ENCODE measurements at regions of chr4 and their contacts with region 1.

Region 1: DNA sequence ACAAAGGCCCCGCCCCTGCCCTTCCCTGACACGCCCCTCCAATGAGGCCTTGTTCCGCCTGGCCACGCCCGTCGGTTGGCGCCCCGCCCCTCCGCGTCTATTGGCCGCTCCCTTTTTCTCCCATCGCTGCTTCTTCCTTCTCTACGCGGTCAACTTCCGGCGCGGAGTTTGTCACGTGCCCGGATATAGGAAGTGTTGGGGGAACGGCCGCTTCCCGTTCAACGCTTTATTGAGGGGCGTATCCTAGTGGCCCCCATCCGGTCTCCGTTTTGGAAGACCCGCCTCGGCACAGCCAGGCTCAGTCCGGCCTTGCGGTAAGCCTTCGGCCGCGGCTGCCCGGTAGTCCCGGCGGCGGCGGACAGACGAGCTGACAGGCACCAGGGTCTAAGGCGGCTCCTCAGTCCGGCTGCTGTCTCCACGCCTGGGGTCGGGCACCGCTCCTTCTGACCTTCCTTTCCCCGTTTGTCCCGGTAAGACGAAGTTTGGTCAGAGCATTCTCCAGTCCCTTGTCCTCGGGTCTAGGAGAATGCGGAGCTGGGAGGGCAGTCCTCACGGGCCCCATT is at the start of gene EXOC1:
- DNase-seq: peak; percentile 94 to 97
- ATAC-seq: peak; percentile 100
- H3K4me3 ChIP-seq: peak within 1 kb of the TSS; percentile 74 to 97 (median 87)
- H3K27ac ChIP-seq: peak within 1 kb of the TSS; percentile 72 to 86 (median 82)
- H3K4me1 ChIP-seq: peaks cover 10 to 22% of the 10 kb centered on the region in 2 donors
- H3K27me3 ChIP-seq: no peaks in the 10 kb centered on the region
- CTCF ChIP-seq: no peak
- POLR2A ChIP-seq: peak; percentile 40 to 55
- total RNA-seq, gene EXOC1: 14.8 to 22.3 (median 20.3) TPM

Region 2: GRCh38 chr4:55345980-55346850 is 507.4 kb before region 1 on chr4 and contains the start of gene SRD5A3:
- in situ Hi-C with region 1: loop called in 3 of 4 experiments (anchors 25 kb)
- intact Hi-C with region 1: loop called (anchors 5 kb)
- DNase-seq: peak; percentile 61 to 74
- ATAC-seq: peak; percentile 95 to 97
- H3K4me3 ChIP-seq: peak within 1 kb of the TSS; percentile 68 to 99 (median 82)
- H3K27ac ChIP-seq: peak within 1 kb of the TSS; percentile 89 to 99 (median 95)
- H3K4me1 ChIP-seq: peaks cover 0 to 20% of the 10 kb centered on the region in 2 donors
- H3K27me3 ChIP-seq: no peaks in the 10 kb centered on the region
- CTCF ChIP-seq: peak; percentile 88 to 99 (median 97)
- POLR2A ChIP-seq: peak; percentile 47 to 68
- total RNA-seq, gene SRD5A3: 2.4 to 7.6 (median 5.1) TPM

Region 3: GRCh38 chr4:55358668-55359067 is 494.9 kb before region 1 on chr4:
- in situ Hi-C with region 1: loop called in 1 of 4 experiments (anchors 25 kb)
- intact Hi-C with region 1: no loop called
- DNase-seq: no peak
- ATAC-seq: peak; percentile 84 to 97
- H3K4me3 ChIP-seq: peak overlapping the region in 1 of 4 donors; percentile 16
- H3K27ac ChIP-seq: peak overlapping the region; percentile 25 to 67 (median 63)
- H3K4me1 ChIP-seq: peaks cover 8 to 23% of the 10 kb centered on the region in 2 donors
- H3K27me3 ChIP-seq: no peaks in the 10 kb centered on the region
- CTCF ChIP-seq: no peak
- POLR2A ChIP-seq: no peak

Region 4: GRCh38 chr4:55395529-55396307 is 457.8 kb before region 1 on chr4 and contains the start of gene TMEM165:
- in situ Hi-C with region 1: loop called in 1 of 4 experiments (anchors 25 kb)
- intact Hi-C with region 1: loop called (anchors 5 kb)
- DNase-seq: peak; percentile 88
- ATAC-seq: peak; percentile 89 to 90
- H3K4me3 ChIP-seq: peak within 1 kb of the TSS; percentile 72 to 95 (median 77)
- H3K27ac ChIP-seq: peak within 1 kb of the TSS; percentile 83 to 96 (median 91)
- H3K4me1 ChIP-seq: peaks cover 32 to 38% of the 10 kb centered on the region in 2 donors
- H3K27me3 ChIP-seq: no peaks in the 10 kb centered on the region
- CTCF ChIP-seq: peak in 1 of 5 experiments; percentile 15
- POLR2A ChIP-seq: peak; percentile 92 to 93
- total RNA-seq, gene TMEM165: 23.5 to 80.3 (median 48.9) TPM

Region 5: DNA sequence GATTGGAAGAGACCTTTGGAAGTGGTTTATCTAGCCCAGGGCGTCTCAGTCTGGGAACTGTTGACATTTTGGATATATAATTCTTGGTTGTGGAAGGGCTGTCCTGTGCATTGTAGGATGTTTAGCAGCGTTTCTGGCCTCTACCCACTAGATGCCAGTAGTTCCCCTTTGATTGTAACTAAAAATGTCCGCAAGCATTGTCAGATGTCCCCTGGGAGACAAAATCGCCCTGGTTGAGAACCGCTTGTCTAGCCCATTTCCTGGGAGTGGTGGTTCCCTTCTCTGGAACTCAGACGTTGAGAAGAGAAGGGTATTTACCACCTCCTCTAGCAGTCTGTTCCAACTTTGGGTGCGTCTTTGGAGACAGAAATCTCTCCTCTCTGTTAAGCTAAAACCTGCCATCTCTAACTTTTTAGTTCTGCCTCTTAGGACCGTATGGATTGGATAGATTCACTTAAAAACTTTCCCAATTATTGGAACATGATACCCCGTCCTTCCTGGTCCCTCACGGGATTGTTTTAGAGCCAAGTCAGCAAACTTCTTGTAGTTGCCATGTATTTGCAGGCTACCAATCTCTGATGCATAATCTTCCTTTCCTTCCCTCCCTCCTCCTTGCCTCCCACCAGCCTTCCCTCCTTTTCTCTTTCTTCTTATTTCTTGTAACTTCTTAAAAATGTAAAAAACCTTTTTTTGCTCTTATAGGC is 443.9 kb before region 1 on chr4:
- in situ Hi-C with region 1: loop called in 1 of 4 experiments (anchors 25 kb)
- intact Hi-C with region 1: no loop called
- DNase-seq: no peak
- ATAC-seq: peak in 1 of 2 donors; percentile 53
- H3K4me3 ChIP-seq: no peak overlapping the region
- H3K27ac ChIP-seq: no peak overlapping the region
- H3K4me1 ChIP-seq: peaks cover 0 to 16% of the 10 kb centered on the region in 2 donors
- H3K27me3 ChIP-seq: no peaks in the 10 kb centered on the region
- CTCF ChIP-seq: peak in 1 of 5 experiments; percentile 15
- POLR2A ChIP-seq: no peak

Region 6: DNA sequence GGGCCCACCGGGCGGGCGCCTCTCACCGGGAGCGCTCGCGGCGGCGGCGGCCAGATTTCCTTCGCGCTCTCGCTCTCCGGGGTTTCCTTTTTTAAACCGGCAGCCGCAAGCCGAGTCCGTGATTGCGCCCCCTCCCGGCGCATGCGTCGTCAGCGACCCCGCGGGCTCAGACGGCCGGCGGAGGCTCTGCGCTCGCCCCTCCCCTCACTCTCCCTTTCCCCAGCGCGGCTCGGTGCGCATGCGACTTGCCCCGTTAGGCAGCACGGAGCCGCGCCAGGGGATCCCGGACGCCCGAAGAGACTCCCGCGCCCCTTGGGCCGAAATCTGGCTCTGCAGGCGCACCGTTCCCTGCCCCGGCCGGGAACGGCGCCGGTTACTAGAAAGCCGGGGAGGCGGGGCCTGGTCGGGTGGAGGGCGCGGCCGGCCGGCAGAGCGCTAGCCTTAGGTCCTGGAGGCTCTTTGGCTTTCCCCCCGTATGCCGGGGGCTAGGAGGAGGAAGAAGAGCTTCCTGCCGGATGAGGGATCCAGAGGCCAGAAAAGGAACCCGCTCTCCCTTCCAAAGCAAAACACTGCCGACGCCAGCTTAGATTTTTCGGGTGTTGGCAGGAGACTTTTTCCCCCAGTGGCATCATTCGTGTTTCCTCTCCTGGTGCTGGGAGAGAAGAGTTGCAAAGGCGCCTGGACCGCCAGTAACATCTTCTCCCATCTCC is 306.7 kb before region 1 on chr4 and contains the start of gene CLOCK:
- in situ Hi-C with region 1: no loop called
- intact Hi-C with region 1: loop called (anchors 2 kb)
- DNase-seq: peak; percentile 75 to 82
- ATAC-seq: peak; percentile 86 to 87
- H3K4me3 ChIP-seq: peak within 1 kb of the TSS; percentile 81 to 97 (median 93)
- H3K27ac ChIP-seq: peak within 1 kb of the TSS; percentile 98 to 99 (median 98)
- H3K4me1 ChIP-seq: peaks cover 19 to 25% of the 10 kb centered on the region in 2 donors
- H3K27me3 ChIP-seq: no peaks in the 10 kb centered on the region
- CTCF ChIP-seq: peak; percentile 30 to 71 (median 67)
- POLR2A ChIP-seq: peak; percentile 72 to 76
- total RNA-seq, gene CLOCK: 21.9 to 60.7 (median 34.2) TPM

Region 7: DNA sequence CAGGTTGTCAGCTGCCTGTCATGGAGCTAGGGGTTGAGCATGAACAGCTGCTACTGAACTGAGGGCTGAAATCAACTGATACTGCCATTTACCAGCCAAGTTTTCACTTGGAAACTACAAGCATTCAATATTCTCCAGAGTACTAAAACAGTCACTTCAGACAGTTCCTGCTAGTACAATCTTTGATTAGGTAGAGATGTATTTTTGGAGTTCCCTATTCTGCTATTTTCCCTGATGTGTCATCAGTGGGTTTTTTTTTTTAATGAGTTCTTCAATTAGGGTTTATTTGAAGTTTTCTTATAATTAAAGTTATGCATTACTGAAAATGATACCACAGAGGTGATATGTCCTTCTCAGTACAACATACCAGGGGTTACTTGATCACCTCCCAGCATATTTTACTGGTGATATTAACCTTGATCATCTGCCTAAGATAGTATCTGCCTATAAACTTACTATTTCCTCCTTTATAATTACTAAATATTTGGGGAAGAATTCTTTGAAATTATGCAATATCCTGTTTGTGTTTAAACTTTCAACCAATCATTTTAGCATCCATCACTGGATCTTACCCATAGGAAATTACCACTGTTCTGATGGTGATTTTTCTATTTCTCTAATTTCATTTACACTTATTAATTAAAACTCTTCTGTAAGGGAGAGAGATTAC is 275.1 kb before region 1 on chr4:
- in situ Hi-C with region 1: no loop called
- intact Hi-C with region 1: no loop called
- DNase-seq: no peak
- ATAC-seq: no peak
- H3K4me3 ChIP-seq: no peak overlapping the region
- H3K27ac ChIP-seq: no peak overlapping the region
- H3K4me1 ChIP-seq: no peaks in the 10 kb centered on the region
- H3K27me3 ChIP-seq: no peaks in the 10 kb centered on the region
- CTCF ChIP-seq: no peak
- POLR2A ChIP-seq: no peak

Region 8: DNA sequence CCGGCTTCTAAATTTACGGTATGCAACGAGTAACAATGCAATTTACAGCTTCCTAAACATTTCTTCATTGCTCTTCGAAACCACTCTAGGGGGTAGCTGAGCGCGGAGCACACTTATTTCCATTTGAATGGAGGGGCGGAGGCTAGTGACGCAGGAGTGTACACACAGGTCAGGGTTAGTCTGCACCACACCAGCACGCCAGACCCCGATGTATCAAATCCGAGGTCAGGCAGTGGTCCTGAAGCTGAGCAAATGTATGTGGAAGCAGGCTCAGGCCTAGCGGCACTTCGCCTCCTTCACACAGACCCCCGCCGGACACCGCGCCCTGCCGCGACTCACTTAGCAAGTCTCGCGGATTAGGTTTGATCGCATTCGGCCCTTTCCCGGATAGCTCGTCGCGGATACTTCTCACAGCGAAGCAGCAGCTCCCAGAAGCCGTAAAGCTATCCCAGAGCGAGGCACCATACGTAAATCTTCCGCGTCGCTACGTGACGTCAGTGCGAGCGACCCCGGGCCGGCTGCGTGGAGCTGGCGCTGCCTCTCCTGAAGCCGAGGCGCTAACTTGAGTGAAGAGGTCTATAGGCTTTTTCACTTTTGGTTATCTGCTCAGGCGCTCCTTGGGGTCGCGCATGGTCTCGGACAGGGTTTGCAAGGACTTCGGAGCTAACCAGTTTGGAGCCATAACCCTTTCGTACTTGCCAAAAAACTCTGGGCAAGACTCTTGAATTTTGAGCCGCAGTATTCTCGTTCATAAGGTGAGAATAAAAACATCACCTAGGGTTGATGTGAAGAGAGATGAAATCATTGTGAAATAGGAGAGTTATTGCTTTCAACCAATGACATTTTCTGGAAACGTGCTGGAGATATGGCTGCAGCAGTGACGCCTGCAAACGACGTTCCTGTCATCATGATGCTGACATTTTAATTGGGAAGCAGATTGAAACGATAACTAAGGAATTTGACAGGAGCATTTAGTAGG is 533.7 kb after region 1 on chr4 and contains the start of gene AASDH:
- in situ Hi-C with region 1: no loop called
- intact Hi-C with region 1: loop called (anchors 10 kb)
- DNase-seq: peak; percentile 78 to 86
- ATAC-seq: peak; percentile 96 to 97
- H3K4me3 ChIP-seq: peak within 1 kb of the TSS; percentile 72 to 98 (median 78)
- H3K27ac ChIP-seq: peak within 1 kb of the TSS; percentile 90 to 98 (median 92)
- H3K4me1 ChIP-seq: peaks cover 20 to 26% of the 10 kb centered on the region in 2 donors
- H3K27me3 ChIP-seq: no peaks in the 10 kb centered on the region
- CTCF ChIP-seq: peak in 1 of 5 experiments; percentile 32
- POLR2A ChIP-seq: peak; percentile 50 to 62
- total RNA-seq, gene AASDH: 2.6 to 4.2 (median 3.3) TPM

Measured in gastrocnemius medialis (tissue), 4 donors.